ENCODE measurements at regions of chr7 and their contacts with region 1.

Region 1: DNA sequence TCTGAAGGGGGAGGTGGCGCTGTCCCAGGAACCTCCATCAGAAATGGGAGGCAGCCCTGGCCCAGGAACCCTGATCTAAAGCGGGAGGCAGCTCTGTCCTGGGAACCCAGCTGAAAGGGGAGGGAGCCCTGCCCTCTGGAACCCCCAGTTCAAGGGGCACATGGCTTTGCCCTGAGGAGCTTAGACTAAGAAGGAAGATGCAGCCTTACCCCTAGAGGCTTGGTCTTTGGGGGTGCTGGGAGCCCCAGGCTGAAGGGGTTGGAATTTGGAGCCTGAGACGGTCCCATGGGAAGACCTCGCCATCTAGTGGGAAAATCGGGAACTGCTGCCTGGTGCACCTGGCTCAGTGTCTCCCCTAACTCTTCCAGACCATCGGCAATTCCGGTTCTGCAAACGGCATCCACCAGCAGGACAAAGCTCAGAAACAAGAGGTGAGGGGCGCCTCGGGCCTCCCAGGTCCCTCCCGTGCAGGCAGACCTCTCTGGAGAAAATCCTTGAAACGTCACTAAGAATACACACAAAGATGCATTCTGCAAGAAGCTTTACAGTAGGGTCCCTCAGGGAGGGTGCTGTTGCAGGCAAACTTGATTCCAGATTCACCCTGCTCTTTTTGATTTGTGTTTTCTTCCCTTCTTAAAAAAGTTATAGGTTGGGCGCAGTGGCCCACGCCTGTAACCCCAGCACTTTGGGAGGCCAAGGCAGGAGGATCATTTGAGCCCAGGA is 52.4 kb upstream of the GTF2IRD1 start:
- DNase-seq: peak; percentile 82 to 97
- H3K4me3 ChIP-seq: no peak overlapping the region
- H3K27ac ChIP-seq: no peak overlapping the region
- H3K4me1 ChIP-seq: peaks cover 0 to 5% (median under 1%) of the 10 kb centered on the region in 4 experiments; a peak in 3 of 7 replicates
- H3K27me3 ChIP-seq: no peaks in the 10 kb centered on the region
- CTCF ChIP-seq: peak; percentile 92 to 98 (median 97)
- EP300 ChIP-seq: no peak
- POLR2A ChIP-seq: no peak
- RAD21 ChIP-seq: peak; percentile 94

Region 2: GRCh38 chr7:73645643-73646174 is 755.6 kb before region 1 on chr7:
- CTCF ChIA-PET with region 1: no interaction called
- POLR2A ChIA-PET with region 1: no interaction called
- DNase-seq: no peak
- H3K4me3 ChIP-seq: no peak overlapping the region
- H3K27ac ChIP-seq: no peak overlapping the region
- H3K4me1 ChIP-seq: peaks cover 0 to 14% (median 7%) of the 10 kb centered on the region in 4 experiments; a peak in 6 of 7 replicates
- H3K27me3 ChIP-seq: peaks cover 0 to 30% (median 25%) of the 10 kb centered on the region in 4 experiments; a peak in 6 of 7 replicates
- CTCF ChIP-seq: no peak
- EP300 ChIP-seq: no peak
- POLR2A ChIP-seq: no peak
- RAD21 ChIP-seq: no peak

Region 3: DNA sequence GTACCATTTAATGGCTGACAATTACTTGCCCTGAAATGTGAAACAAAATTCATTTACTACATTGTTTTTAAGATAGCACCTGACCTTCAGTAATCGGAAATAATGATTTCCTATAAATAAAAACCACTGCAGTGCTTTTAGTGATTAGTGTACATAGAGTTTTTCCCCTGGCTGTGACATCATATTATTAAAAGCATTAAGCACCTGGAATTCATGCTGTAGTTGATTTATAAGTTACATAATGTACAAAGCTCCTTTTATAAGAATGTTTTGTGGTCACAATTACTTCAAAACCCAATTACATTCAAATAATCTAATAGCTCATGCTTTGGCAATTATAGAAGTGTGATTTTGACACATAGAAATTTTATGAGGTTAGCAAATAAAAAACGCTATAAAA is 271.4 kb before region 1 on chr7:
- CTCF ChIA-PET with region 1: no interaction called
- POLR2A ChIA-PET with region 1: no interaction called
- DNase-seq: no peak
- H3K4me3 ChIP-seq: no peak overlapping the region
- H3K27ac ChIP-seq: no peak overlapping the region
- H3K4me1 ChIP-seq: peaks cover 0 to 3% (median 0%) of the 10 kb centered on the region in 4 experiments; a peak in 1 of 7 replicates
- H3K27me3 ChIP-seq: no peaks in the 10 kb centered on the region
- CTCF ChIP-seq: no peak
- EP300 ChIP-seq: no peak
- POLR2A ChIP-seq: no peak
- RAD21 ChIP-seq: no peak

Region 4: GRCh38 chr7:74217455-74218342 is 183.6 kb before region 1 on chr7:
- CTCF ChIA-PET with region 1: interaction called, 10 read pairs
- POLR2A ChIA-PET with region 1: interaction called, 3 read pairs
- DNase-seq: no peak
- H3K4me3 ChIP-seq: no peak overlapping the region
- H3K27ac ChIP-seq: no peak overlapping the region
- H3K4me1 ChIP-seq: peaks cover 0 to 2% (median 0%) of the 10 kb centered on the region in 4 experiments; a peak in 4 of 7 replicates
- H3K27me3 ChIP-seq: no peaks in the 10 kb centered on the region
- CTCF ChIP-seq: no peak
- EP300 ChIP-seq: no peak
- POLR2A ChIP-seq: no peak
- RAD21 ChIP-seq: no peak

Region 5: DNA sequence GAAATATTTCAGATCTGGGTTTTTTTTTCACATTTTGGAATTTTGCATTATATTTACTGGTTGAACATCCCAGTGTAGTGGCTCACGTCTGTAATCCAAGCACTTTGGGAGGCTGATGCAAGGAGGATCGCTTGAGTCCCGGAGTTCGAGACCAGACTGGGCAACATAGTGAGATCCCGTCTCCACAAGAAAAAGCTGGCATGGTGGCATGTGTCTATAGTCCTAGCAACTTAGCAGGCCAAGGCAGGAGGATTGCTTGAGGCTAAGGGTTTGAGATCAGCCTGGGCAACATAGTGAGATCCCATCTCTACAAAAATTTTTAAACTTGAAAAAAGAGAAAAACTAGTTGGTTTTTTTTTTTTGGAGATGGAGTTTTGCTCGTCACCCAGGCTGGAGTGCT is 153.1 kb before region 1 on chr7:
- CTCF ChIA-PET with region 1: interaction called, 21 read pairs
- POLR2A ChIA-PET with region 1: no interaction called
- DNase-seq: no peak
- H3K4me3 ChIP-seq: no peak overlapping the region
- H3K27ac ChIP-seq: no peak overlapping the region
- H3K4me1 ChIP-seq: peaks cover 0 to 1% (median under 1%) of the 10 kb centered on the region in 4 experiments; a peak in 2 of 7 replicates
- H3K27me3 ChIP-seq: no peaks in the 10 kb centered on the region; a peak in 1 of 7 replicates
- CTCF ChIP-seq: no peak
- EP300 ChIP-seq: no peak
- POLR2A ChIP-seq: no peak
- RAD21 ChIP-seq: no peak

Region 6: DNA sequence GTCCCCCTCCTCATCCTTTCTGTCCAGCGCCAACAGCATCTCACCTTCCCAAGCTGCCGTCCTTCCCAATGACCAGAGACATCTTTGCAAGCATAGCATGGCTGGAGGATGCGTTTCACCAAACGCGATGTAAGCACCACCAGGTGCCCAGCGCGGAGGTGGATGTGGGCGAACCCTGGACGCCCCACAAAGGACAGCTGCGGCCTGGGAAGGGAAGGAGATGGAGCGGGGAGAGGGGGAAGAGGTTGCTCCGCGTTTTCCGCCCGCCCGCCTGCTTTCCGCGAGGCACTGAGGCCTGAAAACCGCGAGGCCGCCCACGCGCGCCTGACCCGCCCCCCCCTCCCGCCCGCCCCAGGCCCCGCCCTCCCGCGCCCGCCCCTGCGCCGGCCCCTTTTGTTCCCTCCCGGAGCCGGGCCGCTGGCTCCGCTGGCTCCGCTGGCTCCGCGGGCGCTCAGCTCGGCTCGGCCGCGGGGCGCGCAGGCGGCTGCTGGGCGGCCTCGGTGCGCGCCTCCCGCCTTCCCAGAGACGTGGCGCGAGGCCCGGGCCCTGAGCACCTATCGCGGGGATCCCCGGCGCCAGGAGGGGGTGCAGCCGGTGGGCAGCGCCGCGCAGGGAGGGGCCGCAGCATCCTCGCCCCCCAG is 112.2 kb before region 1 on chr7 and contains the start of gene CLIP2:
- CTCF ChIA-PET with region 1: interaction called, 18 read pairs
- POLR2A ChIA-PET with region 1: interaction called, 3 read pairs
- DNase-seq: peak in 1 of 2 experiments; percentile 82
- H3K4me3 ChIP-seq: peak within 1 kb of the TSS; percentile 79 to 97 (median 84)
- H3K27ac ChIP-seq: no peak within 1 kb of the TSS
- H3K4me1 ChIP-seq: peaks cover 9 to 44% (median 29%) of the 10 kb centered on the region in 4 experiments
- H3K27me3 ChIP-seq: peaks cover 0 to 4% (median 0%) of the 10 kb centered on the region in 4 experiments; a peak in 3 of 7 replicates
- CTCF ChIP-seq: no peak
- EP300 ChIP-seq: no peak
- POLR2A ChIP-seq: peak in 1 of 2 experiments; percentile 34; a peak in 1 of 3 replicates
- RAD21 ChIP-seq: no peak; a peak in 1 of 4 replicates
- total RNA-seq, gene CLIP2: 39.8 and 41.5 TPM in 2 replicates

Region 7: DNA sequence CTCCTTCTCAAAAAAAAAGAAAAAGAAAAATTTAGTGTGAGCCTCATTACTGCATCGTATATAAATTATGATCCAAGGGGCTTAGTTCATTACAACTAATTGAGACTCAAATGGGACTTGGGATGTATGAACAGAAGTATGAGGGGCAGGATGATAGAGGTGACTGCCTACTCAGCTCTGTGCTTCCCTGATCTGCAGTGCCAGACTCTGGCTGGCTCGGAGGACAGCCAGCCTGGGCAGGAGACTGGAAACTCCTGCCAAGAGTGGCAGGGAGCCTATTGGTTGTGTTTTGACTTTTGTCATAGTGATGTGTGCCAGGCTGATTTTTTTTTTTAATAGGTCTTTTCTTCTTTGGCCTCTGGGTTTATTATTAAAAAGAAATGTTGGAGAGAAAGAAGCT is 21.4 kb before region 1 on chr7:
- CTCF ChIA-PET with region 1: interaction called, 16 read pairs
- POLR2A ChIA-PET with region 1: no interaction called
- DNase-seq: no peak
- H3K4me3 ChIP-seq: no peak overlapping the region
- H3K27ac ChIP-seq: no peak overlapping the region
- H3K4me1 ChIP-seq: no peaks in the 10 kb centered on the region
- H3K27me3 ChIP-seq: no peaks in the 10 kb centered on the region
- CTCF ChIP-seq: no peak
- EP300 ChIP-seq: no peak
- POLR2A ChIP-seq: no peak
- RAD21 ChIP-seq: no peak

Region 8: GRCh38 chr7:74429153-74429747 is 28.0 kb after region 1 on chr7:
- CTCF ChIA-PET with region 1: interaction called, 19 read pairs
- POLR2A ChIA-PET with region 1: interaction called, 5 read pairs
- DNase-seq: peak in 1 of 2 experiments; percentile 73
- H3K4me3 ChIP-seq: peak overlapping the region in 2 of 4 experiments; percentile 14 to 40; a peak in 4 of 8 replicates
- H3K27ac ChIP-seq: peak overlapping the region; percentile 41; the same call in 1 of the 2 replicates
- H3K4me1 ChIP-seq: peaks cover 5 to 19% (median 14%) of the 10 kb centered on the region in 4 experiments
- H3K27me3 ChIP-seq: no peaks in the 10 kb centered on the region
- CTCF ChIP-seq: no peak
- EP300 ChIP-seq: no peak
- POLR2A ChIP-seq: no peak
- RAD21 ChIP-seq: no peak

Region 9: GRCh38 chr7:74684921-74685320 is 283.6 kb after region 1 on chr7:
- CTCF ChIA-PET with region 1: no interaction called
- POLR2A ChIA-PET with region 1: no interaction called
- DNase-seq: no peak
- H3K4me3 ChIP-seq: no peak overlapping the region
- H3K27ac ChIP-seq: no peak overlapping the region
- H3K4me1 ChIP-seq: no peaks in the 10 kb centered on the region; a peak in 1 of 7 replicates
- H3K27me3 ChIP-seq: no peaks in the 10 kb centered on the region
- CTCF ChIP-seq: no peak
- EP300 ChIP-seq: no peak
- POLR2A ChIP-seq: no peak
- RAD21 ChIP-seq: no peak